ENCODE measurements at regions of chr2 and their contacts with region 1.

Region 1: GRCh38 chr2:137838255-137839092 is 125.8 kb upstream of the HNMT start:
- DNase-seq: peak; percentile 35
- CTCF ChIP-seq: peak; percentile 52

Region 2: GRCh38 chr2:136423516-136423996 is 1414.9 kb before region 1 on chr2:
- CTCF ChIA-PET with region 1: interaction called, 16 read pairs
- POLR2A ChIA-PET with region 1: no interaction called
- DNase-seq: peak; percentile 85
- CTCF ChIP-seq: peak; percentile 89

Region 3: GRCh38 chr2:136932700-136933099 is 905.8 kb before region 1 on chr2:
- CTCF ChIA-PET with region 1: interaction called, 13 read pairs
- POLR2A ChIA-PET with region 1: no interaction called
- DNase-seq: no peak
- CTCF ChIP-seq: no peak

Region 4: GRCh38 chr2:137467246-137467862 is 371.1 kb before region 1 on chr2:
- CTCF ChIA-PET with region 1: interaction called, 32 read pairs
- POLR2A ChIA-PET with region 1: no interaction called
- DNase-seq: peak; percentile 14
- CTCF ChIP-seq: peak; percentile 54

Region 5: DNA sequence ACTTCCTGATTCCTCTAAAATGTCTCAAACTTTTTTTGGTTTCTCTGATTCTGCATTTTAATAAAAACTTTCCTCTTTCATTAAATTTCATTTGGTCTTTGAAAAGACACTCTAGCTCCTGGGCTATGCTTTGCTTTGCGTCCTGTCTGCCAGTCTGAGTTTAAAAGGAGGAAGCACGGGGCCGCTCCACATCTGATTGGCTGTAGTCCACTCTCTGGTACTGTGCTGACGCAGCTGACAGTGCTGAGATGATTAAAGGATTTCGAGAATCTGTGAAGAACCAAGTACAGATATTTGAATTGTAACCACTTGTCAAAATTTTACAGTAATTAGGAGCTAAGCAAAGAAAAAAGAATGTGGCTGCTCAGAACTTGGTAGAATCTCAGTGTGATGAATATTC is 73.8 kb before region 1 on chr2:
- CTCF ChIA-PET with region 1: no interaction called
- POLR2A ChIA-PET with region 1: no interaction called
- DNase-seq: no peak
- CTCF ChIP-seq: no peak